GM10248 (cell line): ENCODE measurements at regions of chr19 and their contacts with region 1.

Region 1: DNA sequence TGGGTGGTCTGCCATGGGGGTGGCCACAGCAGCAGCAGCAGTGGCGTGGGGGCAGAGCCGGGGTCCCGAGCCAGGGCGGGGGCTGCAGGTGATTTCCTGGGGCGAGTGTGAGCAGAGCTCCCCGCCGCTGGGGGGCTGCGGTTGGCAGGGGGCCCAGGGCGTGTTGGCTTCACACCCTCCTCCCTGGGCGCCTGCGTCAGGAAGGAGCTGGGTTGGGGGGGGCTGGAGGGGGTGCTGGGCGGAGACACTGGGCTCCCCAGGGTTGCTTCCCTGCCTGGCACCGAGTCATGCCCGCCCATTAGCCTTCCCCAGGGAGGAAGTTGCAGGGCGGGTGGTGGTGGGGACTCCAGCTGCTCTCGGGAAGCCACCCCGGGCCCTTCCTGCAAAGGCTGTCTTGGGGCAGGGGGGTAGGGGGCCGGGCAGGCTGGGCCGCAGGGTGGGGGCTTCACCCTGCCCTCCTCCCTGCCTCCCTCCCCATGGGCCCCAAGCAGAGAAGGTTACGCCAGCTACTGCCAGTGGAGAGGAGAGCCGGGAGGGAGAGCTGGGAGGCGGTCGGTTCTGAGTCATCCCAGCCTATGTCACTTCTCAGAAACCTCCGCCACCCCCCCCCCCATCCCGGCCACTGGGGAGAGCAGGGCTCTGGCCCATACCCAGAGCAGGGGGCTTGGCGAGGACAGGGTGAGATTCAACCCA is 4.6 kb downstream of the MIDN start:
- DNase-seq: no peak
- CTCF ChIP-seq: no peak

Region 2: DNA sequence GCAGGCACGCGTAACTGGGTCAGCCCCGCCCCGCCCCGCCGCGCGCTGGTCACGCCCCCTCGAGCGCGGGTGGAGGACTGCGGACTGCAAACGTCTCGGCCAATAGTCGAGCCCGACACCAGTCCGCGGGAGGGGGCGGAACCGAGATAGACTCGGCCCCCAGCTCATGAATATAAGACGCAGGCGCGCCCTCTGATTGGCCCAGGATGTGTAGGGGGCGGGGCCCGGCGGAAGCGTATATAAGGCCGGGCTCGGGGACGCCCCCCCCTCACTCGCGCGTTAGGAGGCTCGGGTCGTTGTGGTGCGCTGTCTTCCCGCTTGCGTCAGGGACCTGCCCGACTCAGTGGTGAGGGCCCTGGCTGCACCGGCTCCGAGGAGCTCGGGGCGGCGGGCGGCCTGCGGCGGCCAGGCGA is 16.1 kb after region 1 on chr19 and contains the start of gene CIRBP:
- CTCF ChIA-PET with region 1: interaction called, 28 read pairs
- POLR2A ChIA-PET with region 1: interaction called, 18 read pairs
- DNase-seq: peak; percentile 98
- CTCF ChIP-seq: no peak

Region 3: GRCh38 chr19:1295169-1296012 is 42.4 kb after region 1 on chr19:
- CTCF ChIA-PET with region 1: no interaction called
- POLR2A ChIA-PET with region 1: no interaction called
- DNase-seq: peak; percentile 69
- CTCF ChIP-seq: no peak